ENCODE measurements at regions of chr6 and their contacts with region 1.

Region 1: DNA sequence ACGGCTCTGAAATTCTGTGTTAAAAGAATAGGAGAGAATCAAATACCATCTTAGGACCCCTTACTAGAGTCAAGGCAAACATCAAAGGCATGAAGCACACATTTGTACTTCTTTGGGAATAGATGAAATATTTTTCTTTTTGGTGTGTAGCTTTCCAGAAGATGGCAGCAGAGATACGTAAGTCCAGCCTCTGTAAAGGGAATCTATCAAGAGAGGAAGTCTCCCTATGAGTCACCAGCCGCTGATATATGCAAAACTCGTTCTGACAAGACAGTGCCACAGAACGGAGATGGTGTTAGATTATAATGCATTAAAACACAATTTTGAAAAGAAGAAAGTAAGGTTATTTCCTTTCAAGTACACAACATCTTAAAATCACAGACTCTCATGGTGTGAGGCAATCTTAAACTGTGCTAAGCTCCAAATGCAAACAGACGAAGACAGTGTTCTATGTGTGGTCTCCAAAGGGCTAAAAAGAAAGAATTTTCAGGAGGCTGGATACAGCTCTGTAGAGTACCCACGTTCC is 120.0 kb upstream of the AGPAT4 start:
- DNase-seq: peak; percentile 72
- H3K4me3 ChIP-seq: no peak overlapping the region
- H3K27ac ChIP-seq: no peak overlapping the region
- H3K4me1 ChIP-seq: no peaks in the 10 kb centered on the region
- H3K27me3 ChIP-seq: no peaks in the 10 kb centered on the region
- CTCF ChIP-seq: peak; percentile 34 to 37
- POLR2A ChIP-seq: no peak

Region 2: DNA sequence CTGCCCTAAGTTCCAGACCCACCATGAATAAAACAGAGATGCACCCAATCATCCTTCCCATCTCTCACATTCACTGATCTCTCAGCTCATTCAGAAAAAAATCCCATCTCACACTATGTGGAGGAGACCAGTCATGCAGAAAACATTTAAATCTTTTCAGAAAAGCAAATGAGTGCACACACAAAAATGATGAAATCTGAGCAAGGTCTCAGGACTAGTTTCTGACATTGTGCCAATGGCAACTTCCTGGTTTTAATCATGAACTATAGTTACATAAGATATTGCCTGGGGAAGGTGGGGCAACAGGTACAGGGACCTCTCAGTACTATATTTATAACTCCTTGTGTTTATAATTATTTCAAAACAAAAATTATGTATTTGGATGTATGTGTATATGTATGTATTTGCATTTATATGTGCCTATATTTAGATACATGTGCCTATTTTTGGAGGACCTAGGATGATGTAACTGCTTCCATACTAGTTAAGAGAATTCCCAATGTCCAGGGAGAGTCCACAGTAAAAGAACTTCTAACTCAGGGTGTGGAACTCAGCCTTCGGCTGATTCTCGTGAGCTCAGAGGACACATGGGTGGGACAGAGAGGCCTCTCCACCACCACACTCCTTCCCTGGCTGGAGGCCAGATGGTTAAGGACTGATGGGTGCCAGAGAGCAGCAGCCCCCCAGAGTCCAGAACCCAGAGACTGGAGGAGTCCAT is 474.0 kb before region 1 on chr6:
- CTCF ChIA-PET with region 1: no interaction called
- POLR2A ChIA-PET with region 1: no interaction called
- dilution Hi-C with region 1: loop called (anchors 25 kb)
- intact Hi-C with region 1: no loop called
- DNase-seq: no peak
- H3K4me3 ChIP-seq: no peak overlapping the region
- H3K27ac ChIP-seq: no peak overlapping the region
- H3K4me1 ChIP-seq: no peaks in the 10 kb centered on the region
- H3K27me3 ChIP-seq: no peaks in the 10 kb centered on the region
- CTCF ChIP-seq: no peak
- POLR2A ChIP-seq: no peak

Region 3: GRCh38 chr6:161111261-161111660 is 282.6 kb before region 1 on chr6:
- CTCF ChIA-PET with region 1: no interaction called
- POLR2A ChIA-PET with region 1: no interaction called
- dilution Hi-C with region 1: no loop called
- intact Hi-C with region 1: no loop called
- DNase-seq: no peak
- H3K4me3 ChIP-seq: no peak overlapping the region
- H3K27ac ChIP-seq: no peak overlapping the region
- H3K4me1 ChIP-seq: no peaks in the 10 kb centered on the region
- H3K27me3 ChIP-seq: no peaks in the 10 kb centered on the region
- CTCF ChIP-seq: no peak
- POLR2A ChIP-seq: no peak

Region 4: DNA sequence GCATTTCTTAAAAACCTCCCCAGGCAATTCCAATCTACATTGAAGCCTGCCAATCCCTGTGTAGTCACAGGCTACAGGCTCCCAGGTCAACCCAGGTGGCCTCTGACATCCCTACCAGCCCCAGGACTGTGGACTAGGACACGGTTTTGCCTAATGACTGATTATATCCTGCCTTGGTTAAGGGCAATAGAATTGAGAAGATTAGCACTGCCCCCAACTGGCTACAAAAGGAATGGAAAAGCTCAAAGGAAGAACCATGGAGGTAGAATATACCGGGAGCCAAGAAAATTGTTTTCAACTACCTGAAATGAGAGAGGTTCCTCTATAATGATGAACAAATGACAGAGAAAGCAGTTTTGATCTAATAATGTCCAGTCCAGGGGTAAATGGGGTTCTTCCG is 301.1 kb after region 1 on chr6:
- CTCF ChIA-PET with region 1: no interaction called
- POLR2A ChIA-PET with region 1: no interaction called
- dilution Hi-C with region 1: no loop called
- intact Hi-C with region 1: loop called (anchors 1 kb)
- DNase-seq: peak; percentile 4
- H3K4me3 ChIP-seq: no peak overlapping the region
- H3K27ac ChIP-seq: no peak overlapping the region
- H3K4me1 ChIP-seq: no peaks in the 10 kb centered on the region
- H3K27me3 ChIP-seq: no peaks in the 10 kb centered on the region
- CTCF ChIP-seq: peak in 1 of 2 donors; percentile 9
- POLR2A ChIP-seq: no peak

Region 5: DNA sequence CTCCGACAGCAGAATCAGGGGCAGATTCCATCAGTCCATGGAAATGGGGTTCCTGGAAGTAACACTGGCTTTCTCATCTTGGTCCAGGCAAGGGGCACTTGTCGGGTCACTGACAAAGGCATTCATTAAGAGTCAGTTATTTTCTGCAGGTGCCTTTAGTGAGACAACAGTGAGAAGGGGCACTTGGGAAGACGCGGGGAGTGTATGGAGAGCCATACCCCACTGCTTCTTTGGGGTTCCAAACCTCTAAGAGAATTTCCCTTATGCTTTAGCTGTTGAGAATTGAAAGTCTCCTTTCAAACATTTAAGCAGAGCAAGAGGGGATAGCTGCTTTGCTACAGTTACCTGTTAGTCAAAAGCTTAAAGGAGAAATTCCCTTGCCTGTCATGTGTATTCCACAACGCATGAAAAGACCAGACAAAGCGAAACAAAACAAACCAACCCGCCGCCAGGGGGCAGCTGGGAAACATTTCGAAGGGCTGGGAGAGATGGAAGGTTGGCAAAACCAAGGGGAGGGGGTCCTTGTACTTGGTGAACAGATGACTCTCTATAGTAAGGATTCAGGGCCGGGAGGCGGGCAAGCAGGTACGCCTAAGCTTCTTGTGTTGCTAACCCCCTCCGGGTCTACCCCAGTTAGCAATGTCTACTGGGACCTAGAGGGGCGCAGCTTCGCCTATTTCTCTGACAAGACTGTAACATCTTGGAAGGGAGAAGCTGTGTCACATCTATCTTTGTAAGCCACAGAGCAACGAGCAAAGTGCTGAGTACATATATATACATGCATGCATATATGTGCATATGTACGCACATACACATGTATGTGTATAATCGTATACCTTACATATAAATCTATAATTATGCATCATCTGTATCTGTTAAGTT is 354.9 kb after region 1 on chr6:
- CTCF ChIA-PET with region 1: no interaction called
- POLR2A ChIA-PET with region 1: no interaction called
- dilution Hi-C with region 1: no loop called
- intact Hi-C with region 1: loop called (anchors 1 kb)
- DNase-seq: peak; percentile 5
- H3K4me3 ChIP-seq: no peak overlapping the region
- H3K27ac ChIP-seq: no peak overlapping the region
- H3K4me1 ChIP-seq: no peaks in the 10 kb centered on the region
- H3K27me3 ChIP-seq: no peaks in the 10 kb centered on the region
- CTCF ChIP-seq: peak; percentile 26 to 35
- POLR2A ChIP-seq: no peak